Right cardiac atrium (tissue), 5 donors: ENCODE measurements at regions of chr11 and their contacts with region 1.

Region 1: GRCh38 chr11:82698576-82699352 is 34.9 kb downstream of the FAM181B start:
- DNase-seq: no peak
- ATAC-seq: peak in 1 of 2 donors; percentile 25
- H3K4me3 ChIP-seq: no peak overlapping the region
- H3K27ac ChIP-seq: no peak overlapping the region
- H3K4me1 ChIP-seq: no peaks in the 10 kb centered on the region
- H3K27me3 ChIP-seq: no peaks in the 10 kb centered on the region

Region 2: DNA sequence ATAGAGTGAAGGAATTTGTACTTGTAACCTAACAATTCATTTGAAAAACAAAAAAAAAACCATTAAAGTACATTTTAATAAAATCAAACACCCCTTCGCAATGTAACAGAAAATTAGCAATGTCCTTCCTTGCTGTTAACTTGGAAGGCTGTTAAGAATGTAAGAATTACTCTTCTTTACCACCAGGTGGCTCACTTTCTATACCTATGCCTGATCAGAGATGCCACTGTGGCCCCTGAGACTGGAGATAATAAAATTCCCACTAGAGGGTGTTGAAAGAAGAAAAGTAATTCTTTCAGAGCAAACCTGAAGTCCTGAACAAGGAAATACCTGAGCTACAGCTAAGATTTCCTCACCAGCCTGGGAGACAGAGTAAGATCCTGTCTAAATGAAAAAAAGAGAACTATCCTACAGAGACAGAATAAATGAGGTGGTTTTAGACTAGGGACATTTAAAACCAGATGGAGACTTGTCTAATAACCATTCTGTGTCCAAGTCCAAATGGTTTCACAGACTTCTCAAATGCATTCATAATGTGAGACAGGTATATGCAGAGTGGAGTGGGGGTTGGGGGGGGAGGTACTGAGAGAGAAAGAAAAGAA is 1054.4 kb before region 1 on chr11:
- intact Hi-C with region 1: loop called in 1 of 4 experiments (anchors 10 kb)
- DNase-seq: no peak
- ATAC-seq: no peak
- H3K4me3 ChIP-seq: no peak overlapping the region
- H3K27ac ChIP-seq: no peak overlapping the region
- H3K4me1 ChIP-seq: no peaks in the 10 kb centered on the region
- H3K27me3 ChIP-seq: no peaks in the 10 kb centered on the region

Region 3: DNA sequence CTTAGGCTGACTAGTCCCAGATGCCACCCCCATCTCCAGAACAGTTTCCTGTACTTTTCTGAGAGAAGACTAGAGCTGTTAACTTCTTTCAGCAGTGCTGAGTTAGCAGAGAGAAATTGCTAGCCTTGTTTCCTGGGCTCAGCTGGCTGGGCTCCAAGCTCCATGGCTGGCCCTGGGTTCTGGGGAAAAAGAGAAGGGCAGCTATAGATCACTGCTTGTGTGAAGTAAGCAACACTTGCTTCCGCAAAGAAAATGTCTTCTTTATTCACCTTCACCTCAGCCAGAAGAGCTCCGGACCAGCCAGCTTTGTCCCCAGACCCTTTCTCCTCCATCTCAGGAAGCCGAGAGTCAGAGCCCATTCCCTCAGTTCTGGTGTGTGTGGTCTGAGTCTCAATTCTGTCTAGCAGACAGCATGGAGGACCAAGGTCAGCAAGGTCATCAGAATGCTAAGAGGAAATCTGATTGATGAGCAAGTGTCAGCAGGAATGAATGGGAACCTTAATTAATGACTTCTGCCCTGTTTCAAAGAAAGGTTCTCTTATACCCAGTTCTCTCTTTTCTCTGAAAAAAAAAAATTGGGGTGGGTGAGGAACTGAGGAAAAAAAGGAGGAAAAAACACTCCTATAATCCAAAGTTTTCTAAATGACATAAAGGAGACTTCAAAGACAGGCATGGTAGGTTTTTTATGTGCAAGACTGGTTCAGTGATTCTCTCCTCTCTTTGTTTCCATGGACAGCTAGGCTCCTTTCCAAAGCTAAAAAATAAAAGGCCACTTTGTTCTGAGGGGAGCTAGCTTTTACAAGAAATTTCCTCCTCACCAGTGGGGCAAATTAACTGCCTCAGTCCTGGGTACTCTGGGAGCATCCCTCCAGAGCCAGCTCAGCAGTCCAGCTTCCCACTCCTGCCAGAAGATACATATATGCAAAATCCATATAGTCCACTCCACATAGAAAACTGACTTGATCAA is 98.5 kb after region 1 on chr11:
- intact Hi-C with region 1: no loop called
- DNase-seq: peak; percentile 34 to 84 (median 79)
- ATAC-seq: peak; percentile 39 to 57
- H3K4me3 ChIP-seq: no peak overlapping the region
- H3K27ac ChIP-seq: no peak overlapping the region
- H3K4me1 ChIP-seq: no peaks in the 10 kb centered on the region
- H3K27me3 ChIP-seq: no peaks in the 10 kb centered on the region